ENCODE measurements at regions of chr2 and their contacts with region 1.

Region 1: DNA sequence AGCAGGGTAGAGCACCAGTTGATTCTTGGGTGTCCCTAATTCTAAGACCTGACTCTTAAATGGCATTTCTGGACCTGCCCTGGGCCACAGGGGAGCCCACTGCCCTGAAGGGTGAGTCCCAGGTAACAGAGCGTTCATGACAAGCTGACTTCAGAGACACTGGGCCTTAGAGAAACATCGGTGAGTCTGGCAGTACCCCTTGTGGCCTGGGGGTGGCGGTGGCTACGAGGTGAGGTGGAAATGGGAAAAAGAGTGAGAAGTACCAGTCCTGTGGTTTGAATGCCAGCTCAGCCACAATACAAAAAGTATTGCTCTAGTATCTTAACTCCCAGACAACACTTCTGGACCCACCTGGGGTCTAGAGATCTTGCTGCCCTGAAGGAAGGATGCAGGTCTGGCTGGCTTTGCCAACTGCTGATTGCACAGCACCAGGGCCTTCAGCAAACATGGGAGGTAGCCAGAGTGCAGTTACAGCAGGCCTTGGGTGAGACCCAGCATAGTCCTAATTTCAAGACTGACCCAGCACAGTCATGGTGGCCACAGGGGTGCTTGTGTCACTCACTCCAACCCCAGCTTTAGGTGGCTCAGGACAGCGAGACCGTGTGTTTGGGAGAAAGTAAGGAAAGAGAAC is 44.5 kb downstream of the USP34 start:
- DNase-seq: peak; percentile 60 to 85 (median 74)
- ATAC-seq: peak; percentile 81 to 87
- H3K4me3 Mint-ChIP-seq: peak overlapping the region in 9 of 10 donors; percentile 51 to 85 (median 71)
- H3K27ac Mint-ChIP-seq: peak overlapping the region; percentile 94 to 98 (median 97)
- H3K4me1 Mint-ChIP-seq: peaks cover 37 to 72% (median 65%) of the 10 kb centered on the region in 4 donors
- H3K27me3 Mint-ChIP-seq: no peaks in the 10 kb centered on the region

Region 2: GRCh38 chr2:61405813-61406212 is 20.6 kb before region 1 on chr2:
- POLR2A ChIA-PET with region 1: no interaction called
- DNase-seq: no peak
- ATAC-seq: no peak
- H3K4me3 Mint-ChIP-seq: no peak overlapping the region
- H3K27ac Mint-ChIP-seq: peak overlapping the region in 2 of 10 donors; percentile 0 to 34
- H3K4me1 Mint-ChIP-seq: peaks cover 4 to 19% (median 12%) of the 10 kb centered on the region in 4 donors
- H3K27me3 Mint-ChIP-seq: no peaks in the 10 kb centered on the region

Region 3: GRCh38 chr2:61470965-61471904 is 44.9 kb after region 1 on chr2 and contains the start of gene USP34:
- POLR2A ChIA-PET with region 1: interaction called, 34 read pairs
- DNase-seq: peak; percentile 86 to 97 (median 91)
- ATAC-seq: peak; percentile 87 to 88
- H3K4me3 Mint-ChIP-seq: peak within 1 kb of the TSS; percentile 86 to 99 (median 94)
- H3K27ac Mint-ChIP-seq: peak within 1 kb of the TSS; percentile 95 to 100 (median 98)
- H3K4me1 Mint-ChIP-seq: peaks cover 5 to 47% (median 34%) of the 10 kb centered on the region in 4 donors
- H3K27me3 Mint-ChIP-seq: no peaks in the 10 kb centered on the region
- polyA plus RNA-seq, gene USP34: 14.5 to 19.1 (median 17.6) TPM

Measured in naive thymus-derived CD8-positive, alpha-beta T cell (primary cell).